ENCODE measurements at regions of chr10 and their contacts with region 1.

Region 1: GRCh38 chr10:132681858-132682755 is 103.8 kb downstream of the NKX6-2 start:
- DNase-seq: peak; percentile 59

Region 2: GRCh38 chr10:132722394-132723329 is 40.6 kb after region 1 on chr10:
- intact Hi-C with region 1: loop called in 1 of 2 experiments (anchors 2 kb)
- DNase-seq: no peak

Region 3: GRCh38 chr10:132848291-132848701 is 166.2 kb after region 1 on chr10:
- intact Hi-C with region 1: no loop called
- DNase-seq: no peak

Region 4: DNA sequence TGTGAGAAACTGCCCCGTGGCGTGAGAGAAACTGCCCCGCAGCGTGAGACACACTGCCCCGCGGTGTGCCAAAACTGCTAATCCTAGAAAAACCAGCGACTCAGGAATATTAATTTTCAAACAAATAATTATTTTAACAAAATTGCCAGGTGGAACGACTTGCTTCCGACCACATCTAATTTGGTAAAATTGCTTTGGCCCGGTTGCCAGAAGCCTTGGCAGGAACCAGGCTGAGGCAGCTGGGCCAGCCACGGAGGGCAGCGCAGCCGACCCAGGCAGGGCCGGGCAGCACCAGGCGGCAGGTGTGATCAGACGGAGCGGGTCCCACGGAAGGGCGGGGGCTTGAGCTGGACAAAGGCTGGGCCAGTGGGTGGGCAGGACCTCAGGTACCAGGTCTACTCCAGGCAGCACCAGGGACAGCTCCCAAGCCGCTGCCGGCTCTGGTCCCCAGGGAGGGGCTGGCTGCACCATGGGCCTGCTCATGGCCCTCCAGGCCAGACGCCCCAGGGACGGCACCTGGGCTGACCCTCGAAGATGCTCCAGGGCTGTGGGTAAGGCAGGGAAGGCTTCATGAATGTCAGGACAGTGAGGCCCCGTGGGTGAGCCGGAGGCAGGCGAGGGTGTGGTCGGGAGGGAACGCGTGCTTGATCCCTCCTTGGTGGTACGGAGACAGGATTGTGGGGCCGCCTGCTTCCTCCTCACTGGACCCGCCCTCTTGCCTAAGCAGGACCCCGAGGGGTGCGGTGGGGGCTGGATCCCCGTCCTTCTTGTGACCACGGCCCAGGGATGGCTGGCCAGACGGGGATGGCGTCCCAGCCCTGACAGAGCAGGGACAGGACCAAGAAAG is 398.0 kb after region 1 on chr10:
- intact Hi-C with region 1: no loop called
- DNase-seq: no peak

Region 5: DNA sequence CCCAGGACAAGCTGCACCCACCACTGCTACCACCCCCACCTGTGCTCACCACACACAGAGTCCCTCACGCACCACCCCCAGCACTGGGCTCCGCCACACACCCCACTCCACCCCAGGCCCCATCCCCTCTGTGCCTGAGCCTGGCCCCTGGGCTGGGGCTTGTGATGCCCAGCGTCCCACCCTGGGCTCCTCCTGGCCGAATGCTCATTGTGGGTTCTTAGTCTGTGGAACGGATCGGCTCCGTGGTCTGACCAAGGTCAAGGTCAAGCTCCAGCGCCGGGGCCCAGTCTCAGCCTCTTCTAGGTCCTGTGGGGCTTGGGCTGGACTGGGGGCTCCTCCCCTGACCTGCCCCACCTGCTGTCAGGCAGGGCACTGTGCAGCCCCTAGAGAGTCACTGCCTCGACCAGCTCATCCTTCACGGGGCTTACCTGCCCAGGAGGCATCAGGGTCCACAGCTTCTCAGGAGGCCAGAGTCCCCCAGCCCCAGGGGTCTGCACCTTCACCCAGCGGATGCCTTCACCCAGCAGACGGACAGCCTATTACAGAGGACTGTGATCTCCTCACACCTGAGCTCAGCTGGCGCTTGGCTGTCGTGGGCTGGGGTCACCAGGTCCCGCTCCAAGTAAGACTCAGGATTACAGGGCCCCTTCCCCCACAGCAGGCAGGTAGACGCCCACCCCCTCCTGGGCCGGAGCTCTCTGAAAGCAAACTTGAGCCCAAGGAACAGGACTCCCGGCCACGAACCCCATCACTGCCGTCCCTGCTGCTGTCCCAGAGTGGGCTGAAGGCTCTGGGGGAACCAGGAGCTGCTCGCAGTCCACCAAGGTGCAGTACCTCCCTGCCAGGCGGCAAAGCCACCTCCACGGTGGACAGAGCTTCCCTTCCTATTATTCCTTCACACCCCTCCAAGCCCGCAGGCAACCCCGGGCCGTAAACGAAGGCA is 532.6 kb after region 1 on chr10:
- intact Hi-C with region 1: no loop called
- DNase-seq: no peak